B cell (primary cell): ENCODE measurements at regions of chr2 and their contacts with region 1.

Region 1: DNA sequence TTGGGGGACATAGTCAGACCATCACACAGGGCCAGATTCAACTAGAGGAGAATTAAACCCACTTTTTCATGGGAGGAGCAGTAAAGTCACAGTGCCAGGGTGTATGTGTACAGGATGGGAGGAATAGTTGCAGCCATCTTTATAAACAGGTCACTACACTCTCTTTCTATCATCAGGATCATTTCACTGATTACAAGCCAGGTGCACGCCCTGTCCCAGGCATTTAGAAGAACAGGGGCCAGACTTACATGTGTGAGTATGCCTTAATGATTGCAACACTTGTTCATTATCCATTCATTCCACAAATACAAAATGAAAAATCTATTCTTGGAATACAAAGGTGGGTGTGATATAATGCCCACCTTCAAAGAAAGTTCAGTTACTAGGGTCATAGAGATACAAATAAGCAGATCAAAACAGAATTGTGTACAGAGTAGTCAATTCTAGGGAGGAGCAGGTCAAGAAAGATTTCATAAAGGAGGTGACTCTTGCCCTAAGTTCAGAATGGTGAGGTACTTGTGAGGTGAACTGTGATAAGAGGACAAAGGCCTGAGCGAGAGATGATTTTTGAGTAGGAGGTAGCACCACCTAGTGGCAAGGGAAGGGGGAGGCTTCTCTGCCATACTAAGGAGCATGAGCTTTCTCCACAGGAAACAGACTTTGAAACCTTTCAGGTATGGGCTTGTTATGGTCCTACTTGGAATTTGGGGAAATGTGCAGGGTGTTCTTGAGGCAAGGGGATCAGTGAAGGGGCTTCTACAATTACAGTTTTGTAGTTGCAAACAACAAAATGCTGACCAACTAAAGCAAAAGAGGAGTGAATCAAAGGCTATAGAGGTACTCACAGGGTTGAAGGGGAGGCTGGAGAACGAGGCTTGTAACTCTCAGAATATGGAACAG is 156.3 kb downstream of the SUCLG1 start:
- DNase-seq: peak; percentile 15
- ATAC-seq: no peak
- H3K4me3 ChIP-seq: no peak overlapping the region
- H3K4me3 Mint-ChIP-seq: no peak overlapping the region
- H3K27ac ChIP-seq: no peak overlapping the region
- H3K27ac Mint-ChIP-seq: no peak overlapping the region
- H3K4me1 ChIP-seq: no peaks in the 10 kb centered on the region
- H3K4me1 Mint-ChIP-seq: no peaks in the 10 kb centered on the region
- H3K27me3 ChIP-seq: no peaks in the 10 kb centered on the region
- H3K27me3 Mint-ChIP-seq: no peaks in the 10 kb centered on the region
- CTCF ChIP-seq: peak; percentile 70

Region 2: GRCh38 chr2:84152462-84152861 is 150.3 kb before region 1 on chr2:
- CTCF ChIA-PET with region 1: no interaction called
- POLR2A ChIA-PET with region 1: no interaction called
- intact Hi-C with region 1: no loop called
- DNase-seq: no peak
- ATAC-seq: no peak
- H3K4me3 ChIP-seq: no peak overlapping the region
- H3K4me3 Mint-ChIP-seq: no peak overlapping the region
- H3K27ac ChIP-seq: no peak overlapping the region
- H3K27ac Mint-ChIP-seq: no peak overlapping the region
- H3K4me1 ChIP-seq: no peaks in the 10 kb centered on the region
- H3K4me1 Mint-ChIP-seq: no peaks in the 10 kb centered on the region
- H3K27me3 ChIP-seq: no peaks in the 10 kb centered on the region
- H3K27me3 Mint-ChIP-seq: peaks cover 3% of the 10 kb centered on the region
- CTCF ChIP-seq: no peak

Region 3: DNA sequence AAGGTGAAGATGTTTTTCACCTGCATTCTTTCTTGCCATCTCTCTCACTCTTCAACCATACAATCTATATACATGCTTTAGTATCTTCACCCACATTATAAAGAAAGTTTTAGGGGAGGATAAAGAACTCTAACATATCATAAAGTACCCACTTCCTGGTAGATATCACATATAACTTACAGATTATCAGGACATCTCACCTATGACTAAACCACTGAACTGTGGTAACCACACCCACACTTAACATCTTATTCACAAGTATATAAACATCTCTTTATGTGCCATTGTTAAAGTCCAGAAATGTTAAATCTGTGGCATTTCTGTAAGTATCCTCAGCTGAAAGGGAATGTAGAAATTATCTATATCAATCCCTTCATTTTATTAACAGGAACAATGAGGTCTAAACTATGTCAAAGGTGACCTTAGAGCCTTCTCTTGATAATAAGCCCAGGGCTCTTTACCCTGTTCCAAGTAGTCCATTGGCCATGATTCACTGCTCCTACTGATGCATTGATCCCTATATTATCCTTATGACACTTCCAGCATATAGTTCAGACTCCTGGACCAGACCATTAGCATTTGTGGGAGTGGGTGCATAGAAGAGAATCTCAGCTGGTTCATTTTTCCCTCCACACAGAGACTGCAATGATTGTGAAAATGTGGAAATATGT is 26.0 kb before region 1 on chr2:
- CTCF ChIA-PET with region 1: no interaction called
- POLR2A ChIA-PET with region 1: no interaction called
- intact Hi-C with region 1: no loop called
- DNase-seq: no peak
- ATAC-seq: no peak
- H3K4me3 ChIP-seq: no peak overlapping the region
- H3K4me3 Mint-ChIP-seq: no peak overlapping the region
- H3K27ac ChIP-seq: no peak overlapping the region
- H3K27ac Mint-ChIP-seq: no peak overlapping the region
- H3K4me1 ChIP-seq: no peaks in the 10 kb centered on the region
- H3K4me1 Mint-ChIP-seq: no peaks in the 10 kb centered on the region
- H3K27me3 ChIP-seq: peaks cover 0 to 3% (median 0%) of the 10 kb centered on the region in 4 experiments
- H3K27me3 Mint-ChIP-seq: peaks cover 17% of the 10 kb centered on the region
- CTCF ChIP-seq: no peak

Region 4: DNA sequence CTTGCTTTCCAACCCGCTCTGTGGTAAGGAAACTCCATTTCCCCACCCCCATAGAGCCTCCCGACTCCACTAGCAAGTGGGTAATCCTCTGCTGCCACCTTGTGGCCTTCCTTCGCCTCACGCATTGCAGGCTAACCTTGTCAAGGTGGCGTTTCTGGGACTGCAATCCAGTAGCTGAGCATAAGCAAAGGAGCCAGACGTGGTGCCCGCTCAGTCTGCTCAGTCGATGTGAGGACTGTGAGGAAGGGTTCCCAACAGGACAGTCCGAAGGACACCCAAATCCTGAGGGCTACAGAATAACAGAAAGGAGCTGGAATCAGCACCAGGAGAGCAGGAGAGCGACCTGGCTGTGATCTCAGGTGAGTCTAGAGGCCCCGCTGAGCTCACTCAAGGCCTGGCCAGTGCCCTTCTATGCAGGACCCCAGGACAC is 12.2 kb after region 1 on chr2:
- CTCF ChIA-PET with region 1: interaction called, 12 read pairs
- POLR2A ChIA-PET with region 1: no interaction called
- intact Hi-C with region 1: no loop called
- DNase-seq: peak; percentile 54
- ATAC-seq: peak; percentile 43
- H3K4me3 ChIP-seq: no peak overlapping the region
- H3K4me3 Mint-ChIP-seq: no peak overlapping the region
- H3K27ac ChIP-seq: no peak overlapping the region
- H3K27ac Mint-ChIP-seq: no peak overlapping the region
- H3K4me1 ChIP-seq: no peaks in the 10 kb centered on the region
- H3K4me1 Mint-ChIP-seq: no peaks in the 10 kb centered on the region
- H3K27me3 ChIP-seq: peaks cover 0 to 10% (median 0%) of the 10 kb centered on the region in 4 experiments
- H3K27me3 Mint-ChIP-seq: peaks cover 6% of the 10 kb centered on the region
- CTCF ChIP-seq: peak; percentile 71

Region 5: GRCh38 chr2:84362541-84362940 is 59.8 kb after region 1 on chr2:
- CTCF ChIA-PET with region 1: no interaction called
- POLR2A ChIA-PET with region 1: no interaction called
- intact Hi-C with region 1: no loop called
- DNase-seq: no peak
- ATAC-seq: no peak
- H3K4me3 ChIP-seq: no peak overlapping the region
- H3K4me3 Mint-ChIP-seq: no peak overlapping the region
- H3K27ac ChIP-seq: no peak overlapping the region
- H3K27ac Mint-ChIP-seq: no peak overlapping the region
- H3K4me1 ChIP-seq: no peaks in the 10 kb centered on the region
- H3K4me1 Mint-ChIP-seq: no peaks in the 10 kb centered on the region
- H3K27me3 ChIP-seq: no peaks in the 10 kb centered on the region
- H3K27me3 Mint-ChIP-seq: peaks cover 15% of the 10 kb centered on the region
- CTCF ChIP-seq: no peak

Region 6: DNA sequence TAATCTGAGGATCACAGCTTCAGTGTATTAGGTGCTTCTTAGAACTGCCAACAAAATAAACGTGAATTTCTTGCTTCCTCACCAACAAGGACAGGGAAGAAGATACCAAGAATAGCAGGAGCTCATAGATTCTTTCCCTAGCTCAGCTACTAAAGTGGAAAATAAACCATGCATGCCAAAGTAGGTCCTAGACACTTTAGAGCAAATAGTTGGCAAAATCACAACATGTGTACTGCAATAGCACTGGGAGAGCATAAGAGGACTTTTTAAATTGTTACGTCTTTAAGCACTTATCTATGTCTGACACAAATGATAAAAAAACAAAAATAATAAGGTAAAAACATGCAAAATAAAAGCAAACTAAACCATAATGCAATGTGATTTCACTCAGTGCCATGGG is 106.8 kb after region 1 on chr2:
- CTCF ChIA-PET with region 1: no interaction called
- POLR2A ChIA-PET with region 1: no interaction called
- intact Hi-C with region 1: no loop called
- DNase-seq: no peak
- ATAC-seq: no peak
- H3K4me3 ChIP-seq: no peak overlapping the region
- H3K4me3 Mint-ChIP-seq: no peak overlapping the region
- H3K27ac ChIP-seq: no peak overlapping the region
- H3K27ac Mint-ChIP-seq: no peak overlapping the region
- H3K4me1 ChIP-seq: no peaks in the 10 kb centered on the region
- H3K4me1 Mint-ChIP-seq: no peaks in the 10 kb centered on the region
- H3K27me3 ChIP-seq: peaks cover 0 to 3% (median 1%) of the 10 kb centered on the region in 4 experiments
- H3K27me3 Mint-ChIP-seq: peaks cover 19% of the 10 kb centered on the region
- CTCF ChIP-seq: no peak